SK-N-SH (cell line): ENCODE measurements at regions of chr1 and their contacts with region 1.

Region 1: DNA sequence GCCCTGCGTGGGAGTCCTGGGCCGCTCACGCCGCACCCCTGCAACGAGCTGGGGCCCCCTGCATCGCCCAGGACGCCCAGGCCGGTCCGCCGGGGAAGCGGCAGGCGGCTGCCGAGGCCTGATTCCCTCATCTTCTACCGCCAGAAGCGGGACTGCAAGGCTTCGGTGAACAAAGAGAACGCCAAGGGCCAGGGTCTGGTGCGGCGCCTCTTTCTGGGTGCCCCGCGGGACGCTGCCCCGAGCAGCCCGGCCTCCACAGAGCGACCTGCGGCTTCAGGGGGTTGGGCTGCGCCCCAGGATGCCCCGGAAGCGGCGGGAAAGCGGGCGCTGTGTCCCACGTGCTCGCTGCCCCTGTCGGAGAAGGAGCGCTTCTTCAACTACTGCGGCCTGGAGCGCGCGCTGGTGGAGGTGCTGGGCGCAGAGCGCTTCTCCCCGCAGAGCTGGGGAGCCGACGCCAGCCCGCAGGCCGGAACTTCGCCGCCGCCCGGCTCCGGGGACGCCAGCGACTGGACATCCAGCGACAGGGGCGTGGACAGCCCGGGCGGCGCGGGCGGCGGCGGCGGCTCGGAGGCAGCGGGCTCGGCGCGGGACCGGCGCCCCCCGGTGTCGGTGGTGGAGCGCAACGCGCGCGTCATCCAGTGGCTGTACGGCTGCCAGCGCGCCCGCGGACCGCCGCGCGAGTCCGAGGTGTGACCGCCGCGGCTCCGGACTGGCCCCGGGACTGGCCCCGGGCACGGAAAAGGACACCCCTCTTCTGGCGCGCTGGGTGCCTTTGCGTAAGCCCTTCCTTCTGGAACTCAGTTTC is 2.7 kb downstream of the FAM110D start:
- DNase-seq: peak; percentile 89
- H3K4me3 ChIP-seq: peak overlapping the region in 1 of 2 experiments; percentile 7; a peak in 1 of 4 replicates
- H3K27ac ChIP-seq: no peak overlapping the region
- H3K4me1 ChIP-seq: peaks cover 2 to 24% of the 10 kb centered on the region in 2 experiments; a peak in 1 of 4 replicates
- H3K27me3 ChIP-seq: no peaks in the 10 kb centered on the region
- CTCF ChIP-seq: no peak
- EP300 ChIP-seq: no peak
- RAD21 ChIP-seq: no peak

Region 2: DNA sequence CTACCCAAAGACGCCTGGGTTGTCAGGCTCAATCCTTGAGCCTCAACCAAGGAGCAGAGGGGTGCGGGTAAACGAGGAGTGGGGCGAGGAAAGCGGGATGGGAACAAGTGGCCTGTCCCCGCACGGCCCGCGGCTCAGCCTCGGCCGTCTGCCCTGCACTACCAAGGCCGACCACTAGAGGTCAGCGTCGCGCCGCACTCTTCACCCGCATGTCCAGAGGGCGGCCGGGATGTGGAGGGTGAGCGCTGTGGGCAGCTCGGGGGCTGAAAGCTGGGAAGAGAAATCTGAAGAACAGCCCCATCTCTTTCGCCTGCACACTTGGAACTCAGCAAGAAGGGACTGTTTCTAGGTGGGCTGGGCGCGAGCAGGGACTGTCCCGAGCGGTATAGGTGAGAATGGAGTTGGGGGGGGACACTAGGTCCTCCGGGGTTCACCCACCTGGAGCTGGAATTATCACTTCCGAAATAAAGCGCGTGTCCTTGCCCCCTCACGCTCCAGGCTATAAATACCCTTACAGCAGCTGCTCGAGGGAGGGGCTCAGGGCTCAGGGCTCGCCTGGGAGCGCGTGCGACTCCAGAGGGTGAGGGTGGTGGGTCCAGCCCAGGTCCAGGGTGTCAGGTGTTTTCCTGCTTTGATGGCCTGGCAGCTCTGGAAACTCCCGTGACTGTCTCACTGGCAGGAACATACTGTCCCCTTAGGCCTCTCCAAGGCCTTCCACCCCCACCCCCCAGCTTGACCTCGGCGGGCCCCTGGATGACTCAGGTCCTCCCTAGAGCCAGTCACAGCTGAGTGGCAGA is 125.5 kb before region 1 on chr1:
- CTCF ChIA-PET with region 1: interaction called, 23 read pairs
- POLR2A ChIA-PET with region 1: no interaction called
- DNase-seq: peak; percentile 95
- H3K4me3 ChIP-seq: peak overlapping the region; percentile 87 to 99
- H3K27ac ChIP-seq: peak overlapping the region in 1 of 2 experiments; percentile 69; a peak in 1 of 4 replicates
- H3K4me1 ChIP-seq: peaks cover 0 to 12% of the 10 kb centered on the region in 2 experiments; a peak in 1 of 4 replicates
- H3K27me3 ChIP-seq: peaks cover 5% of the 10 kb centered on the region; the same call in 1 of the 2 replicates
- CTCF ChIP-seq: peak; percentile 95
- EP300 ChIP-seq: no peak
- RAD21 ChIP-seq: peak; percentile 84

Region 3: DNA sequence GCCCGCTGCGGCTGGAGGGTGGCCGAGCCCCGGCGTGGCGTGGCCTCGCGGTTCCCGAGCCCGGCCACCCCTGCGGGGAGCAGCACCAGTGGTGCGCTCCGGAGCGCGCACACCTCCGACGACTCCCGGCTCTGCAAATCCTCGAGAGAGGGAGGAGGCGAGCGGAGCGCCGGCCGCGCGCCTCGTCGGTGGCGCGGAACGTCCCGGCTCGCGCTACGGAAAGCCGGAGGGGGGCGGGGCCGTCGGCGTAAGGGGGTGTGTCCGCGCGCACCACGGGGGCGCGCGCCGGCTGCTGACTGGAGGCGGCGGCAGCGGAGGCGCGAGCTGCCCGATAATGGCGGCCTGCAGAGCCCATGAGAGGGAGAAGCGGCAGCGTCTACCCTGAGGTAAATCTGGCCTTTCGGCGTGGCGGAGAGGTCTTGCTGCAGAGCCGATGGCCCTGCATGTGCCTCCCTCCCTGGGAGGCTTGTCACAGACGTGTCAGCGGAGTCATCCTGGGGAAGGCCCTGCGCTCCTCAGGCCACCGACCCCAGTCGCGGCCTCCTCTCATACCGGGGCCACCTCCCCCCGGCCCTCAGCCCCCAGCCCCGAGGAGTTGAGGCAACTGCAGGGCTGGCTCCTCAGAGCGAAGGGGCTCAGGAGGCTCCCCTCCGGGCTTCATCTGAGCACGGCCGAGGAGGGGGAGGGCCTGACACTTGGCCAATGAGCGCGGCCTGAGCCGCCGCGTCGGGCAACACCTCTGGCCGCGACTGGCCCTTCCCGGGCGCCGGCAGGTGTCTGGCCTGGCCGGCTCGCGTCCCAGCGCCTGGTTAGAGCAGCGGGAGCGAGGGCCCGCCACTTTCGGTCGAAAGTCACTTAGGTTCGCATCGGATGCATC is 49.8 kb before region 1 on chr1 and contains the start of gene PDIK1L:
- CTCF ChIA-PET with region 1: interaction called, 18 read pairs
- POLR2A ChIA-PET with region 1: interaction called, 3 read pairs
- DNase-seq: peak; percentile 96
- H3K4me3 ChIP-seq: peak within 1 kb of the TSS; percentile 94 to 99
- H3K27ac ChIP-seq: peak within 1 kb of the TSS; percentile 72 to 94
- H3K4me1 ChIP-seq: peaks cover 5 to 13% of the 10 kb centered on the region in 2 experiments
- H3K27me3 ChIP-seq: no peaks in the 10 kb centered on the region
- CTCF ChIP-seq: no peak
- EP300 ChIP-seq: peak in 1 of 2 experiments; percentile 1; a peak in 1 of 4 replicates
- RAD21 ChIP-seq: no peak
- polyA plus RNA-seq, gene PDIK1L: 1.2 and 1.3 TPM in 2 replicates

Region 4: GRCh38 chr1:26126321-26127084 is 35.1 kb before region 1 on chr1:
- CTCF ChIA-PET with region 1: interaction called, 13 read pairs
- POLR2A ChIA-PET with region 1: no interaction called
- DNase-seq: no peak
- H3K4me3 ChIP-seq: no peak overlapping the region
- H3K27ac ChIP-seq: no peak overlapping the region
- H3K4me1 ChIP-seq: peaks cover 4 to 8% of the 10 kb centered on the region in 2 experiments; a peak in 3 of 4 replicates
- H3K27me3 ChIP-seq: no peaks in the 10 kb centered on the region
- CTCF ChIP-seq: no peak
- EP300 ChIP-seq: no peak
- RAD21 ChIP-seq: no peak